ENCODE measurements at regions of chr2 and their contacts with region 1.

Region 1: DNA sequence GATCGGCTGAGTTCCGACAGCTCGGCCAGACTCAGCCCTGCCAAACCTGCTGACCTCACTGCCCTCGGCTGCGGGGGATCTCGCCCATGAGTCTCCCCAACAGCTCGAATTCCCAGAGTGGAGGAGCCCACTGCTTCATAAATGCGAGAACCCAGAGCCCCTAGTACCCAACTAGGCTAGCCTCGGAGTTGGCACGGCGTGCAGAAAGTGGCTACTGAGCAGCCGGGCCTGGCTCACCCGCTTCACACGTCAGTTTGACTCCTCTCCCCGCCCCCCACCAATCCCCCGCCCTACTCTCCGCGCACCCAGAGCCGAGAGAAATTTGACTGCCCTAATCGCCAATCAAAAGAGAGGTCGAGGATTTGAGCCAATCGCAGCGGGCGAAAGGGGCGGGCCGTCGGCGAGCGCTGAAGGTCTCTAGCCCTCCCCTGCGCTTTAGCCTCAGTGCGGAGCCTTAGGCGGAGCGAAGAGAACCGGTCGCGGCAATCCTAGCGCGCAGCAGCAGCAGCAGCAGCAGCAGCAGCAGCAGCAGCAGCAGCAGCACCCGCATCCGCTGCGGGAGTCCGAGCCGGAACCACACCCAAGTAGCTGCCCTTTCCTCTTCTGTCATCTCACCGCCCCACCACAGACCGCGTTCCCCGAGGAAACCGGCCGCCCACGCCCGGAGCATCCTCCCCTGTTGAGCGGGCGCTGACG is at the start of gene GLS:
- H3K4me3 ChIP-seq: peak within 1 kb of the TSS; percentile 94
- H3K27ac ChIP-seq: peak within 1 kb of the TSS; percentile 91
- H3K4me1 ChIP-seq: peaks cover 2% of the 10 kb centered on the region; the same call in 1 of the 2 replicates
- CTCF ChIP-seq: peak; percentile 29; the same call in 1 of the 2 replicates

Region 2: DNA sequence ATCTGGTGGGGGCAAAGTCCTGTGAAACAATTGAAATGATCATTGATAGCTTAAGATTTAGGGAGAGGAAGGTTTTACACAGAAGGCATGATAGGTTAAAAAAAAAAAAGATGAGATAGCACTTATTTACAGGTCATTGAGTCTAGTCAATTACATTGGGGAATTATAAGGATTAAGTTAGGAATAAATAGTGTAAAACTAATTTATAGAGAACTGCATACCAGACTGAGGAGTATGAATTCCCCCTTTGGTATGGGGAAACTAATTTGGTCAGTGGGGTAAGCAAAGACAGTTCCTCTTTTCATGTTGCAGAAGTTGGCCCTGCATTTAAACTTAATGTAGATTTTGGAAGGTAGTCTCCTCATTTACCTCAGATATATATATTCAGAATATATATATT is 10.8 kb after region 1 on chr2:
- CTCF ChIA-PET with region 1: interaction called, 6 read pairs
- POLR2A ChIA-PET with region 1: interaction called, 17 read pairs
- H3K4me3 ChIP-seq: no peak overlapping the region
- H3K27ac ChIP-seq: no peak overlapping the region
- H3K4me1 ChIP-seq: peaks cover 13% of the 10 kb centered on the region
- CTCF ChIP-seq: no peak

Region 3: DNA sequence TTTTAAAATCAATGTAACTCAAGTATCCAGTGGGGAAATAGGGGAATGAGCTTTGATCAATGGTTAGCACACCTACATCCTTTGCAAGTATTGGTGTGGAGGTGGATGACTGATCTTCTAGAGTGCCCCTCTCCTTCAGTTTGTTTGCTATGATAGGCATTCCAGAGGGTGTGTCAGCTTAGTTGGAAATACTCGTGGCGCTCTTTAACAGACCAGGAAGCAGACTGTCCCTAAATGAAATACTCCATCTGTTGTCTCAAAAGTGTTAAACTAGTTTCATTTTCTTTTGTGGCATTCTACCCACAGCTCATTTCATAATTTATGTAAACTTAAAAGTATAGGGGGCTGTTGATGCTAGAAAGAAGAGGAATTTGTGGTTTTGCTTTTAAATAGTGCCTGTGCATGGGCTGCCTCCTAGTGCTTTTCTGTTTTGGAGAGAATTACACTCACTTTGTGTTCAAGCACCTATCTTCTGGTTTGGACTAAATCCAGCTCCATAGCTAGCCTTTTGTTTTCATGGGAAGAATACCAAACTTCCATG is 67.3 kb after region 1 on chr2:
- CTCF ChIA-PET with region 1: no interaction called
- POLR2A ChIA-PET with region 1: interaction called, 18 read pairs
- H3K4me3 ChIP-seq: peak overlapping the region; percentile 6; the same call in 1 of the 2 replicates
- H3K27ac ChIP-seq: peak overlapping the region; percentile 29; the same call in 1 of the 2 replicates
- H3K4me1 ChIP-seq: peaks cover 6% of the 10 kb centered on the region
- CTCF ChIP-seq: no peak